CD4-positive, alpha-beta memory T cell (primary cell): ENCODE measurements at regions of chr14 and their contacts with region 1.

Region 1: GRCh38 chr14:102304611-102305509 is at the start of gene MOK:
- DNase-seq: peak; percentile 96 to 98 (median 98)
- H3K4me3 ChIP-seq: peak within 1 kb of the TSS; percentile 73 to 82
- H3K4me3 Mint-ChIP-seq: peak within 1 kb of the TSS; percentile 88 to 98 (median 96)
- H3K27ac ChIP-seq: peak within 1 kb of the TSS; percentile 63
- H3K27ac Mint-ChIP-seq: peak within 1 kb of the TSS; percentile 95 to 100 (median 99)
- H3K4me1 ChIP-seq: peaks cover 5% of the 10 kb centered on the region
- H3K4me1 Mint-ChIP-seq: peaks cover 5 to 11% (median 8%) of the 10 kb centered on the region in 4 donors
- H3K27me3 ChIP-seq: no peaks in the 10 kb centered on the region
- H3K27me3 Mint-ChIP-seq: peaks cover 2 to 6% of the 10 kb centered on the region in 2 donors
- total RNA-seq, gene MOK: 0.73 to 1.3 TPM

Region 2: DNA sequence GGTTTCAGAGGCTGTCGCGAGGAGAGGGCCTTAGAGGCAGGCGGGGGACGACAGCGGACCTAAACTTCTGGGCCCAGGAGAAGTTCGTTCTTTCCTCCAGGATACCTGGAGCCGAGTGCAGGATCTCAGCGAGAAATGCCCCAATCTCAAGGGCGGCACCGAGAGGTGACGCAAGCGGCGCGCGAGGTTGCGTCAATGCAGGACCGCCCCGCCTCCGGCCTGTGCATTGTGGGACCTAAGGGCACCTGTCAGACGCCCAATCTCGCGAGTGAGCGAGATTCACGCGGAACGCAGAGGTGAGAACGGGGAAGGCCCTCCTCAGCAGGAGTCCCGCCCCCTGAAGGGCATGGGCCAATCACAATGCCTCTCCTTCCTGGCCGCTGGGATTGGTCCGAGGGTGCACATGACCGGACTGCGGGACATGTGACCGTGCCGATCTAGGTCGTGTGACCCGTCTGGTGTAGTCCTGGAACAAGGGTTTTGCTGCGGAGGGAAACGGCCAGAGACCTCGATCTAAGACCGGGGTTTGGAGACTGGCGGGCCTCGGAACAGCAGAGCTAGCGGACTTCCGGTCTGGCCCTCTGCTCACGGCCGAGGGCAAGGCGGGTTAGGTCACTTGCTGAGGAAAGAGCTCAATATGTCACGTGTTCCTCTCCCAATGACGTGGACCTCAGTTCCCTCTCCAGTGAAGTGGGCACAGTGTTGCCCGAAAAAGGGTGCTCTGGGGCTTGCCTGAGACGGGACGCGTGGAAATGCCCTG is 356.8 kb before region 1 on chr14:
- CTCF ChIA-PET with region 1: interaction called, 3 read pairs
- POLR2A ChIA-PET with region 1: no interaction called
- intact Hi-C with region 1: loop called (anchors 1 kb)
- DNase-seq: peak; percentile 99 to 100 (median 100)
- H3K4me3 ChIP-seq: peak overlapping the region; percentile 87 to 98
- H3K4me3 Mint-ChIP-seq: peak overlapping the region; percentile 92 to 99 (median 96)
- H3K27ac ChIP-seq: peak overlapping the region; percentile 94
- H3K27ac Mint-ChIP-seq: peak overlapping the region; percentile 99 to 100 (median 100)
- H3K4me1 ChIP-seq: peaks cover 13% of the 10 kb centered on the region
- H3K4me1 Mint-ChIP-seq: peaks cover 6 to 31% (median 21%) of the 10 kb centered on the region in 4 donors
- H3K27me3 ChIP-seq: peaks cover 5% of the 10 kb centered on the region
- H3K27me3 Mint-ChIP-seq: peaks cover 9 to 16% of the 10 kb centered on the region in 2 donors

Region 3: DNA sequence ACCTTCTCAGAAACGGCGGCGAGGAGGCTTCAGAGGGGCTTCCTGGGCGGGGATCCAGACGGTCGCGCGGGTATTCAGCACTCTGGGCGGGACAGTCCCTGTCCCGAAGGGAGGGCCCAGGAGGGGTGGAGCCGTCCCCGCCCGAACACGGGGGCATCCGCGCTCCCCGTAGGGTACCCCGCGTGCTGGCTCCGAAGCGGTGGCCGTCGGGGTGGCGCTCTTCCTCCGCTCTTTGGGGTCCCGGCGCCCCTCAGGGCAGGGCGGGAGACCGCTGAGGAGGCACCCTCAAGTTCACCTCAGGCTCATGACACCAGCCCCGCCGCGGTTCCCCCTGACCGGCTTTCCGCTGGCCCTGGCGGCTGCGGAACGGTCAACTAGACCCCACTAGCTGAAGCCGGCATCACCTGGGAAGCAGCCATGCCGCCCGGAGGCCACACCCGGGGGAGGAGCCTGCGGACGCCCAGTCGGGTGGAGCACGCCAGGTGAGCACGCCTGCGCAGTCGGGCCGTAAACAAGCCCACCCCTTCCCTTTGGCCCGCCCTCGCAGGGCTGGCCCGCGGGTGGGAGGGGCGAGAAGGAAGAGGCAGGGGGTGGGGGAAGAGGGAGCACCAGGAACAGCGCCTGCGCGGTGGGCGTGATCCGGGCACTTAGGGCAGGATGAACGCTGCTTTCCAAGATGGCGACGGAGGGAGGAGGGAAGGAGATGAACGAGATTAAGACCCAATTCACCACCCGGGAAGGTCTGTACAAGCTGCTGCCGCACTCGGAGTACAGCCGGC is 165.4 kb before region 1 on chr14 and contains the start of gene WDR20:
- CTCF ChIA-PET with region 1: no interaction called
- POLR2A ChIA-PET with region 1: no interaction called
- intact Hi-C with region 1: loop called (anchors 1 kb)
- DNase-seq: peak; percentile 98 to 100 (median 100)
- H3K4me3 ChIP-seq: peak within 1 kb of the TSS; percentile 65 to 91
- H3K4me3 Mint-ChIP-seq: peak within 1 kb of the TSS; percentile 97 to 99 (median 98)
- H3K27ac ChIP-seq: peak within 1 kb of the TSS; percentile 92
- H3K27ac Mint-ChIP-seq: peak within 1 kb of the TSS; percentile 95 to 98 (median 97)
- H3K4me1 ChIP-seq: peaks cover 30% of the 10 kb centered on the region
- H3K4me1 Mint-ChIP-seq: peaks cover 19 to 25% (median 21%) of the 10 kb centered on the region in 4 donors
- H3K27me3 ChIP-seq: no peaks in the 10 kb centered on the region
- H3K27me3 Mint-ChIP-seq: no peaks in the 10 kb centered on the region
- total RNA-seq, gene WDR20: 56.8 to 57.9 TPM

Region 4: GRCh38 chr14:102227184-102227964 is 77.5 kb before region 1 on chr14:
- CTCF ChIA-PET with region 1: no interaction called
- POLR2A ChIA-PET with region 1: no interaction called
- intact Hi-C with region 1: no loop called
- DNase-seq: no peak
- H3K4me3 ChIP-seq: no peak overlapping the region
- H3K4me3 Mint-ChIP-seq: no peak overlapping the region
- H3K27ac ChIP-seq: no peak overlapping the region
- H3K27ac Mint-ChIP-seq: peak overlapping the region in 1 of 7 donors; percentile 32
- H3K4me1 ChIP-seq: no peaks in the 10 kb centered on the region
- H3K4me1 Mint-ChIP-seq: peaks cover 0 to 7% (median 0%) of the 10 kb centered on the region in 4 donors
- H3K27me3 ChIP-seq: no peaks in the 10 kb centered on the region
- H3K27me3 Mint-ChIP-seq: no peaks in the 10 kb centered on the region

Region 5: GRCh38 chr14:102325791-102326345 is 21.0 kb after region 1 on chr14:
- CTCF ChIA-PET with region 1: no interaction called
- POLR2A ChIA-PET with region 1: no interaction called
- intact Hi-C with region 1: no loop called
- DNase-seq: no peak
- H3K4me3 ChIP-seq: no peak overlapping the region
- H3K4me3 Mint-ChIP-seq: no peak overlapping the region
- H3K27ac ChIP-seq: no peak overlapping the region
- H3K27ac Mint-ChIP-seq: peak overlapping the region in 1 of 7 donors; percentile 17
- H3K4me1 ChIP-seq: peaks cover 4% of the 10 kb centered on the region
- H3K4me1 Mint-ChIP-seq: peaks cover 6 to 18% (median 12%) of the 10 kb centered on the region in 4 donors
- H3K27me3 ChIP-seq: no peaks in the 10 kb centered on the region
- H3K27me3 Mint-ChIP-seq: no peaks in the 10 kb centered on the region

Region 6: DNA sequence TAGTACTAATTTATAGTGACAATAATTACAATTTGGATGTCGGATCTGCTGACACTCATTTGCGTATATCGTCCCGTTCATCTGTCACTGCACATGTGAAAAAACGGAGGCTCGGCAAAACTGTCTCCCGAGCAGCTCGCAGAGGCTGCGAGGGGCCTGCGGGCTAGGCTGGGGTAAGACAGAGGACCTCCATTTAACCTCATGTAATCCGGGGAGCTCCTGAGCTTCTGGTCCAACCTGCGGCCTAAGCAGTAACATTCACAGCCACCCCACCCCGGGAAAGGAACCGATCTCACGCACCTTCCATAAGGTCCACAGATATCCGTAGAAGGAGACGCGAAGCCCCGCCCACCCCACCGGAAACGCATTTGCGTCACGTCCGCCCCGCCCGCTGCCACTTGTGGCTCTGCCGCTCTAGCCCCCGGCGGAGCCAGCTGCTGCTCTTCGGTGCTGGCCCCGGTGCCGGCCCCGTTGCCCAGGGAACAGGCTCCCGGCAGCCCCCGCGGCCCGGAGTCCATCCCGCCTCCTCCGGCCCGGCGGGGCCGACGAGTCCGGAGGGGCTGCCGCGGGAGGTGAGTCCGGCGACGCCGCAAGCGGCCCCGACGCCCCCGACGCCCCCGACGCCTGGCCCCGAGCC is 57.8 kb after region 1 on chr14 and contains the starts of genes CINP and TECPR2:
- CTCF ChIA-PET with region 1: no interaction called
- POLR2A ChIA-PET with region 1: interaction called, 4 read pairs
- intact Hi-C with region 1: loop called (anchors 1 kb)
- DNase-seq: peak; percentile 91 to 97 (median 93)
- H3K4me3 ChIP-seq: peak within 1 kb of the TSS; percentile 80 to 95
- H3K4me3 Mint-ChIP-seq: peak within 1 kb of the TSS in 7 of 8 donors; percentile 94 to 98 (median 97)
- H3K27ac ChIP-seq: peak within 1 kb of the TSS; percentile 87
- H3K27ac Mint-ChIP-seq: peak within 1 kb of the TSS; percentile 93 to 99 (median 98)
- H3K4me1 ChIP-seq: peaks cover 33% of the 10 kb centered on the region
- H3K4me1 Mint-ChIP-seq: peaks cover 19 to 39% (median 26%) of the 10 kb centered on the region in 4 donors
- H3K27me3 ChIP-seq: no peaks in the 10 kb centered on the region
- H3K27me3 Mint-ChIP-seq: no peaks in the 10 kb centered on the region
- total RNA-seq, gene CINP: 31.5 to 32.3 TPM
- total RNA-seq, gene TECPR2: 9.9 to 12.6 TPM